K562 (cell line): ENCODE measurements at regions of chr6 and their contacts with region 1.

Region 1: GRCh38 chr6:125212377-125212776 is 58.8 kb downstream of the TPD52L1 start:
- DNase-seq: no peak
- ATAC-seq: no peak
- H3K4me3 ChIP-seq: no peak overlapping the region
- H3K27ac ChIP-seq: no peak overlapping the region
- H3K4me1 ChIP-seq: no peaks in the 10 kb centered on the region
- H3K27me3 ChIP-seq: no peaks in the 10 kb centered on the region
- CTCF ChIP-seq: no peak
- EP300 ChIP-seq: no peak
- POLR2A ChIP-seq: no peak
- RAD21 ChIP-seq: no peak

Region 2: DNA sequence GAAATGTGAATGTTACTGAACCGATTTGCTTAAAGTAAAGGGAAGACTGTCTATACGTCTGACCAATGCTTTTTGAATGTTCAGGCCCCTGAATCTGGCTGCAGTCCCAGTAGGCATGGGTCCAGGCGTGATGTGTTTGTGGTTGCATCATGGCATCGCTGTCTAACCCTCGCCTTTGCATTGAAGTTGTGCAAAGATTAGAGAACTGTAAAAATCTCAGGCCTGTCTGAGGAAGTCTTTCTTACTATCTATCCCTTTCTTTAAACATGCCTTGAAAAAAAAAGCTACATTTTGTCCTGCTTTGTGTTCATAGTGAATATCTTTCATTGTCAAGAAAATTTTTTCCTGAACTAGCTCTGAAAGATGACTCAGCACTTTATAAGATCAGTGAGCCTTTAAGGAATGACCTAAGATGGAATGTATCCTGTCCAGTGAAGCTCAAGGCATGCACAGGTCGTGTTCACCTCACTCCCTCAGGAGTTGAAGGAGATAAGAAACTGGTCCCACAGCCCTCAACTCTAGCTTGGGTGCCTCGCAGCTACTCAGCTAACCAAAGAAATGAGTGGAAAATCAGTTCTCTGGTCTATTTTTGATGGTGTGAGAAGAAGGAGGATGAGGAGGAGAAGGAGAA is 10.3 kb before region 1 on chr6:
- CTCF ChIA-PET with region 1: no interaction called
- POLR2A ChIA-PET with region 1: interaction called, 16 read pairs
- in situ Hi-C with region 1: no loop called
- intact Hi-C with region 1: no loop called
- DNase-seq: peak; percentile 27 to 69 (median 44)
- ATAC-seq: peak; percentile 81
- H3K4me3 ChIP-seq: no peak overlapping the region
- H3K27ac ChIP-seq: peak overlapping the region; percentile 66; the same call in 2 of the 3 replicates
- H3K4me1 ChIP-seq: peaks cover 16 to 43% of the 10 kb centered on the region in 2 experiments
- H3K27me3 ChIP-seq: no peaks in the 10 kb centered on the region
- CTCF ChIP-seq: no peak
- EP300 ChIP-seq: no peak
- POLR2A ChIP-seq: no peak
- RAD21 ChIP-seq: no peak